GM12878 (cell line): ENCODE measurements at regions of chr13 and their contacts with region 1.

Region 1: GRCh38 chr13:45280751-45281634 is 60.0 kb downstream of the TPT1 start:
- DNase-seq: no peak
- ATAC-seq: peak; percentile 99
- H3K4me3 ChIP-seq: no peak overlapping the region
- H3K27ac ChIP-seq: no peak overlapping the region
- H3K4me1 ChIP-seq: no peaks in the 10 kb centered on the region; the same call in 1 of the 2 replicates
- H3K27me3 ChIP-seq: no peaks in the 10 kb centered on the region
- CTCF ChIP-seq: peak; percentile 75 to 85 (median 84)
- EP300 ChIP-seq: no peak
- POLR2A ChIP-seq: no peak
- RAD21 ChIP-seq: peak; percentile 83

Region 2: DNA sequence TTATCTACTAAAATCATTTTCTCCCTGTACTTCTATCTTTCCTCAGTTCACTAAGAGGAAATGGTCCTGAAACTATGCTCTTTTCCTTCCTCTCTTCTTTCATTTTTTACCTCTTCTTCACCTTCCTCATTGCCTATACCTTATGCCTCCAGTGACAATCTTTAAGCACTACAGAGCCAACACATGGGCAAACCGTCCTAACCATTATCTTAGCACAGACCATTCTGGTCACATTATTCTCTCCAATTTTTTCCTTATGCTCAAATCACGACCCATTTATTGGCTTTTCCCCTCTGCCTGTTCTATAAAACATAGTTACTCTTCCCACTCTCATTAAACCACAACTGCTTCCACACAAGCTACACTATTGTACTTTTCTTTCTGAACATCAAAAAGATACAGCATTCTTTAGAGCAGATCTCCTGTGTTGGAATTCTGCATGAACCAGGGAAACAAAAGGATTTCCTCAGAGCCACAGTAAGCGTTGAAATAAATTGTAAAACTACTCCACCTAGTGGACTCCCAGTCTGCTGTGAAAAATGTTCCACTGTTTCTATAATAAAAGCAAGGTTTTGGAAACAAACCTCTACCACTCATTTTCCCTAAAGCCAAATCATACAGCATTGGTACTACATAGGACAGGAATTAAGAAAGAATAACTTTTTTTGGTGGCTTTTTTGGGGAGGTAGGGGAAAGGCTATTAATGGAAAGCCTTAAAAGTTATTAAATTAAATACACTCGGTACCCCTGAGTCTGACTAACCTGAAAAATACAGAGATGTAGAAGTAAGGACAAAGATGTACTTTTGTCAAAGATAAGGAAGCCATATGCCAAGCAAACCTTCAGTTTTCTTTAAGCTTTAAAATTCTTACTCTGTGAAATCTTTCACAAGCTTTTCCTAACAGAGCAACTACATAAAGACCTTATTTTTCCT is 311.2 kb before region 1 on chr13:
- CTCF ChIA-PET with region 1: interaction called, 10 read pairs
- POLR2A ChIA-PET with region 1: no interaction called
- RAD21 ChIA-PET with region 1: interaction called, 3 read pairs
- SMC1A ChIA-PET with region 1: no interaction called
- in situ Hi-C with region 1: no loop called
- intact Hi-C with region 1: no loop called
- DNase-seq: no peak
- ATAC-seq: peak; percentile 16; the same call in 1 of the 3 replicates
- H3K4me3 ChIP-seq: no peak overlapping the region
- H3K27ac ChIP-seq: no peak overlapping the region
- H3K4me1 ChIP-seq: peaks cover 5% of the 10 kb centered on the region
- H3K27me3 ChIP-seq: no peaks in the 10 kb centered on the region
- CTCF ChIP-seq: peak; percentile 48 to 70 (median 67); a peak in 5 of 6 replicates
- EP300 ChIP-seq: no peak
- POLR2A ChIP-seq: no peak
- RAD21 ChIP-seq: peak; percentile 75

Region 3: DNA sequence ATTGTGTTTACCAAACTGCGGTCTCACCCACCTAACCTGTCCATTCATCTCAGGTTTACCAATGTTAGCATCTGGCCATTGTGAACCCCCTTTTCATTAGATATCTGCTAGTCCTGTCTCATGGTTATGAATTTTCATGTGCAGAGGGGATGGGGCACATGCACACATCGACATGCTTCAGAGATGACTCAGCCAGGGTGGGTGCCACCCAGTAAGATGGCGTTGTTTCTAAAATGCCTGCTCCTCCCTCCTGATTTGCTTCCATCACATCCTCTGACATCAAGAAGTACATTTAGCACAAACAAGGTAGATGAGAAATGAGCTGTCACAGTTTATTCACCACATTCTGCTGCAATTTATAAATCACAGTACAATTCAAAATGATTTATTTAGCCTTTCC is 240.4 kb before region 1 on chr13:
- CTCF ChIA-PET with region 1: interaction called, 3 read pairs
- POLR2A ChIA-PET with region 1: no interaction called
- RAD21 ChIA-PET with region 1: interaction called, 63 read pairs
- SMC1A ChIA-PET with region 1: interaction called, 49 read pairs
- in situ Hi-C with region 1: loop called (anchors 5 kb)
- intact Hi-C with region 1: no loop called
- DNase-seq: no peak
- ATAC-seq: no peak
- H3K4me3 ChIP-seq: no peak overlapping the region
- H3K27ac ChIP-seq: no peak overlapping the region
- H3K4me1 ChIP-seq: no peaks in the 10 kb centered on the region
- H3K27me3 ChIP-seq: no peaks in the 10 kb centered on the region
- CTCF ChIP-seq: no peak
- EP300 ChIP-seq: no peak
- POLR2A ChIP-seq: no peak
- RAD21 ChIP-seq: no peak

Region 4: GRCh38 chr13:45055198-45055901 is 225.6 kb before region 1 on chr13:
- CTCF ChIA-PET with region 1: interaction called, 8 read pairs
- POLR2A ChIA-PET with region 1: no interaction called
- RAD21 ChIA-PET with region 1: interaction called, 3 read pairs
- SMC1A ChIA-PET with region 1: interaction called, 14 read pairs
- in situ Hi-C with region 1: no loop called
- intact Hi-C with region 1: no loop called
- DNase-seq: peak; percentile 24
- ATAC-seq: peak; percentile 96
- H3K4me3 ChIP-seq: no peak overlapping the region
- H3K27ac ChIP-seq: no peak overlapping the region
- H3K4me1 ChIP-seq: peaks cover 2% of the 10 kb centered on the region; the same call in 1 of the 2 replicates
- H3K27me3 ChIP-seq: peaks cover 0 to 4% of the 10 kb centered on the region in 2 experiments; a peak in 1 of 4 replicates
- CTCF ChIP-seq: no peak
- EP300 ChIP-seq: peak in 1 of 2 experiments; percentile 65; a peak in 2 of 4 replicates
- POLR2A ChIP-seq: no peak
- RAD21 ChIP-seq: no peak

Region 5: GRCh38 chr13:45292176-45292575 is 11.2 kb after region 1 on chr13:
- CTCF ChIA-PET with region 1: interaction called, 12 read pairs
- POLR2A ChIA-PET with region 1: no interaction called
- RAD21 ChIA-PET with region 1: interaction called, 5 read pairs
- SMC1A ChIA-PET with region 1: interaction called, 3 read pairs
- in situ Hi-C with region 1: no loop called
- intact Hi-C with region 1: no loop called
- DNase-seq: no peak
- ATAC-seq: no peak
- H3K4me3 ChIP-seq: no peak overlapping the region
- H3K27ac ChIP-seq: no peak overlapping the region
- H3K4me1 ChIP-seq: no peaks in the 10 kb centered on the region
- H3K27me3 ChIP-seq: no peaks in the 10 kb centered on the region
- CTCF ChIP-seq: no peak
- EP300 ChIP-seq: no peak
- POLR2A ChIP-seq: no peak
- RAD21 ChIP-seq: no peak

Region 6: DNA sequence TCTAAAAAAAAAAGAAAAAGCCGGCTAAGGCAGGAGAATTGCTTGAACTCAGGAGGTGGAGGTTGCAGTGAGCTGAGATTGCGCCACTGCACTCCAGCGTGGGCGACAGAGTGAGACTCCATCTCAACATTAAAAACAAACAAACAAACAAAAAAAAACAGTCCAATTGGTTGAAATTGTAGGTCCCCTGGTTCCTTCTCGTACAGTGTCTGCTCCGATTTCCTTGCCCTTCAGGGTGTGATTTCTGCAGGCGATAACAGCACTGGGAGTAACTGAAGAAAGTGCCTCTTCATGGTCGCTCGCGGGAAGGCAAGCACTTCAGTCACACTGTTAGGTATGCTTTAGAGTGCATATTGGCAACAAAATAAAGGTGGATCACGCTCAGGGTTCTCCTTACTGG is 20.2 kb after region 1 on chr13:
- CTCF ChIA-PET with region 1: interaction called, 12 read pairs
- POLR2A ChIA-PET with region 1: interaction called, 4 read pairs
- RAD21 ChIA-PET with region 1: interaction called, 5 read pairs
- SMC1A ChIA-PET with region 1: interaction called, 3 read pairs
- in situ Hi-C with region 1: no loop called
- intact Hi-C with region 1: no loop called
- DNase-seq: no peak
- ATAC-seq: no peak
- H3K4me3 ChIP-seq: no peak overlapping the region
- H3K27ac ChIP-seq: no peak overlapping the region
- H3K4me1 ChIP-seq: no peaks in the 10 kb centered on the region; the same call in 1 of the 2 replicates
- H3K27me3 ChIP-seq: no peaks in the 10 kb centered on the region
- CTCF ChIP-seq: no peak
- EP300 ChIP-seq: no peak
- POLR2A ChIP-seq: no peak
- RAD21 ChIP-seq: no peak

Region 7: GRCh38 chr13:45310341-45311125 is 29.5 kb after region 1 on chr13:
- CTCF ChIA-PET with region 1: interaction called, 23 read pairs
- POLR2A ChIA-PET with region 1: no interaction called
- RAD21 ChIA-PET with region 1: interaction called, 8 read pairs
- SMC1A ChIA-PET with region 1: no interaction called
- in situ Hi-C with region 1: no loop called
- intact Hi-C with region 1: no loop called
- DNase-seq: no peak
- ATAC-seq: peak; percentile 48; the same call in 2 of the 3 replicates
- H3K4me3 ChIP-seq: peak overlapping the region; percentile 32; the same call in 1 of the 2 replicates
- H3K27ac ChIP-seq: no peak overlapping the region
- H3K4me1 ChIP-seq: peaks cover 3% of the 10 kb centered on the region
- H3K27me3 ChIP-seq: no peaks in the 10 kb centered on the region; a peak in 1 of 4 replicates
- CTCF ChIP-seq: no peak
- EP300 ChIP-seq: no peak
- POLR2A ChIP-seq: no peak
- RAD21 ChIP-seq: no peak

Region 8: DNA sequence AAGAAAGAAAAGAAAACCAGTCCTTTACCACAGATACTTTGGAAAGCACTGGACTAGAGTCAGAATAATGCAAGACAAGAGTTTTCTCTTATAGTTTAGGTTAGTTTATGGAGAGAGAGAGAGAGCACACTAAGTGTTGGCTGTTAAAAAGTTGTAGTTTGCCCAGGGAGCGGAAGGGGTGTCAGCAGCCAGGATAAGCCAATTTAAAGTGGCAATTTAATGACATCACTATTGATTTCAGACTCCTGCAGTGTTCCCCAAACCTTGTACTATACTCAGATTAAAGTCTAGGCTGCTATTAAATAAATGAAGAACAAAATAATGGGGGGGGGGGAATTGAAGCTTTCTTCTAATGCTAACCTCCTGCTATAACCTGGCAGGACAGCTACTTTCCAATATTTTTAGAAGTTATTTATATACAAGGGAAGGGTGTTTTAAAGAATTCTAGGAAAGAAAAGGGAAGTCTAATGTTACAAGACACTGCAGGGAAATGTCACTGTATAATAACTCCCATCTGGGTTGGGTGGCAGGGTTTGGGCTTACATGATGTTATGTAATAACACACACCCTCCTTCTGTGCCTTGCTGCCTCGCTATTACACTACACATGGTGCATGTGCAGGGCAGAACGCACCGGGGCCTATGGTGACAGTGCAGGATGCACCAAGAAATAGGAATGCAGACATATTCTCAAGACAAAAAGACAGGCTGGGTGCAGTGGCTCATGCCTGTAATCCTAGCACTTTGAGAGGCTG is 40.1 kb after region 1 on chr13:
- CTCF ChIA-PET with region 1: no interaction called
- POLR2A ChIA-PET with region 1: no interaction called
- RAD21 ChIA-PET with region 1: no interaction called
- SMC1A ChIA-PET with region 1: no interaction called
- in situ Hi-C with region 1: no loop called
- intact Hi-C with region 1: no loop called
- DNase-seq: no peak
- ATAC-seq: no peak
- H3K4me3 ChIP-seq: no peak overlapping the region
- H3K27ac ChIP-seq: no peak overlapping the region
- H3K4me1 ChIP-seq: no peaks in the 10 kb centered on the region
- H3K27me3 ChIP-seq: no peaks in the 10 kb centered on the region
- CTCF ChIP-seq: no peak
- EP300 ChIP-seq: no peak
- POLR2A ChIP-seq: no peak
- RAD21 ChIP-seq: no peak